ENCODE measurements at regions of chr3 and their contacts with region 1.

Region 1: GRCh38 chr3:123559040-123559861 is 25.6 kb downstream of the HACD2 start:
- DNase-seq: no peak
- H3K4me3 ChIP-seq: no peak overlapping the region
- H3K27ac ChIP-seq: no peak overlapping the region
- H3K4me1 ChIP-seq: no peaks in the 10 kb centered on the region
- H3K27me3 ChIP-seq: no peaks in the 10 kb centered on the region
- CTCF ChIP-seq: peak in 2 of 3 experiments; percentile 35 to 59; a peak in 2 of 4 replicates
- EP300 ChIP-seq: no peak
- POLR2A ChIP-seq: no peak
- RAD21 ChIP-seq: peak; percentile 66 to 67

Region 2: DNA sequence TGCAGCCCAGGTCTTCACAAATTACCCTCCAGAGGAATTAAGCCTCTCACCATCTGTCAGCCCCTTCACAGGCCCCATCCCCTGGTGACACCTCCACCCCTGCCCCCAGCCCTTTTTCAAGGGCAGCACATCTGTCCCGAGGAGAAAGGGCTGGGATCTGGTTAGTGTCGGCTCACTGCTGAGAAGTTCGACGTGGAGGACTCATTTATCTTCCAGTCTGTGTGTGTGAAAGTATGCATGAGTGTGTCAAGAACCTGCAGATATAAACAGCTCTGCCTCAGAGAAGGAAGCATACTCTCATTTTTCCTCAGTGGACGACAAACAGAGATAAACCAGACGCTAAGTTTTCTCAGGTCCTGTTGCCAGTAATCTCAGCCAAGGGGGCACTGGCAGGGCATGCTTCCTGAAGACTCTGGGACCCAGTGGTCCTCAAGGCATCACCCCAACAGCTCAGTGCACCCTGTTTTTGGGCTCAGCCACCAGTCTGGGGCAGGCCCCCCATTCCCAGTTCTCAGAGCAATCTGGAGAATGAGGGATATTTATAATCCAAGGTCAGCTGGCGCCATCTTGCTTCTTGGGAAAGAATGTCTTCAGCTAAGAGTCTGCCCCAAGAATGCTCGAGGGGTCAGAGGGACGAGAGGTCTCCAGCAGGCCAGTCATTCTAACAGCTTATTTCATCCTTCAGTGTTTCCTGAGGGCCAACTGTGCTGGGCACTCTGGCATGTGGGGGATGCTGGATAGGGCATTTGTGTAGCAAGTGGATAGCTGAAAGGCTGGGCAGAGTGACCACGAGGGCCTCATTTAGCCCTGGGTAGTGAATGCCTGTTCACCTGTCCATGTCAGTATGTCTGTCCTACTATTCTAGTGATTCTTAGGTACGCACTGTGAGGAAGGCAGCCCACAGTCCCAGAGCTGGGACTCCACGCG is 184.0 kb before region 1 on chr3:
- CTCF ChIA-PET with region 1: interaction called, 13 read pairs
- POLR2A ChIA-PET with region 1: no interaction called
- DNase-seq: no peak
- H3K4me3 ChIP-seq: no peak overlapping the region
- H3K27ac ChIP-seq: no peak overlapping the region
- H3K4me1 ChIP-seq: peaks cover 0 to 4% (median 0%) of the 10 kb centered on the region in 4 experiments; a peak in 1 of 7 replicates
- H3K27me3 ChIP-seq: peaks cover 0 to 2% (median 0%) of the 10 kb centered on the region in 4 experiments; a peak in 1 of 7 replicates
- CTCF ChIP-seq: peak; percentile 29 to 67 (median 54)
- EP300 ChIP-seq: no peak
- POLR2A ChIP-seq: no peak
- RAD21 ChIP-seq: peak; percentile 77 to 84

Region 3: DNA sequence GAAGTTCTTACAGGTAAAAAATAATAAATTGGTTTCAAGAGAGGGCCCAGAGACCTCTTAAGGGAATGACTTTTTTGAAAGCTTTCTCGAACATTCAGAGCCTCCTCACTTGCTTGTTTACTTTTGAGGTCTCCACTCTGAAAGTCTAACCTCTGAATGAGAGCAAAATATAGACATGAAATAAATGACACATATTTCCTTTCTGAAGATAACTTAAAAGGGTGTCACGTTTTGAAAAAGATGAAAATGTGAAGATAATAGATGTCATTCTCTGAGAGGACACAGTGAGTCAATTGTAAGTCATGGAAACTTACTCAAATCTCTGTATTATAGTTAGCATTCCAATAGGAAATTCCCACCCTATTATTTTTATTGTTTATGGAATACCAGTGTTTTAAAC is 19.0 kb before region 1 on chr3:
- CTCF ChIA-PET with region 1: interaction called, 23 read pairs
- POLR2A ChIA-PET with region 1: no interaction called
- DNase-seq: no peak
- H3K4me3 ChIP-seq: no peak overlapping the region
- H3K27ac ChIP-seq: no peak overlapping the region
- H3K4me1 ChIP-seq: no peaks in the 10 kb centered on the region
- H3K27me3 ChIP-seq: no peaks in the 10 kb centered on the region
- CTCF ChIP-seq: no peak
- EP300 ChIP-seq: no peak
- POLR2A ChIP-seq: no peak
- RAD21 ChIP-seq: no peak

Region 4: GRCh38 chr3:123576122-123576521 is 16.9 kb after region 1 on chr3:
- CTCF ChIA-PET with region 1: interaction called, 20 read pairs
- POLR2A ChIA-PET with region 1: interaction called, 4 read pairs
- DNase-seq: no peak
- H3K4me3 ChIP-seq: no peak overlapping the region
- H3K27ac ChIP-seq: no peak overlapping the region
- H3K4me1 ChIP-seq: 0 out of 7 replicates have a peak, but pooled peaks cover 0 to 1% (median 0%) of the 10 kb centered on the region in 4 experiments
- H3K27me3 ChIP-seq: no peaks in the 10 kb centered on the region
- CTCF ChIP-seq: no peak
- EP300 ChIP-seq: no peak
- POLR2A ChIP-seq: no peak
- RAD21 ChIP-seq: no peak

Region 5: GRCh38 chr3:123642182-123642956 is 83.1 kb after region 1 on chr3:
- CTCF ChIA-PET with region 1: interaction called, 11 read pairs
- POLR2A ChIA-PET with region 1: no interaction called
- DNase-seq: peak; percentile 89 to 93
- H3K4me3 ChIP-seq: no peak overlapping the region
- H3K27ac ChIP-seq: no peak overlapping the region
- H3K4me1 ChIP-seq: peaks cover 0 to 6% (median 2%) of the 10 kb centered on the region in 4 experiments; a peak in 4 of 7 replicates
- H3K27me3 ChIP-seq: no peaks in the 10 kb centered on the region
- CTCF ChIP-seq: peak; percentile 62 to 98 (median 97)
- EP300 ChIP-seq: 0 out of 3 replicates have a peak, but pooled peaks of 1 of the 2 experiments have one; percentile 35
- POLR2A ChIP-seq: no peak
- RAD21 ChIP-seq: peak; percentile 76 to 79